BJ (cell line): ENCODE measurements at regions of chr10 and their contacts with region 1.

Region 1: DNA sequence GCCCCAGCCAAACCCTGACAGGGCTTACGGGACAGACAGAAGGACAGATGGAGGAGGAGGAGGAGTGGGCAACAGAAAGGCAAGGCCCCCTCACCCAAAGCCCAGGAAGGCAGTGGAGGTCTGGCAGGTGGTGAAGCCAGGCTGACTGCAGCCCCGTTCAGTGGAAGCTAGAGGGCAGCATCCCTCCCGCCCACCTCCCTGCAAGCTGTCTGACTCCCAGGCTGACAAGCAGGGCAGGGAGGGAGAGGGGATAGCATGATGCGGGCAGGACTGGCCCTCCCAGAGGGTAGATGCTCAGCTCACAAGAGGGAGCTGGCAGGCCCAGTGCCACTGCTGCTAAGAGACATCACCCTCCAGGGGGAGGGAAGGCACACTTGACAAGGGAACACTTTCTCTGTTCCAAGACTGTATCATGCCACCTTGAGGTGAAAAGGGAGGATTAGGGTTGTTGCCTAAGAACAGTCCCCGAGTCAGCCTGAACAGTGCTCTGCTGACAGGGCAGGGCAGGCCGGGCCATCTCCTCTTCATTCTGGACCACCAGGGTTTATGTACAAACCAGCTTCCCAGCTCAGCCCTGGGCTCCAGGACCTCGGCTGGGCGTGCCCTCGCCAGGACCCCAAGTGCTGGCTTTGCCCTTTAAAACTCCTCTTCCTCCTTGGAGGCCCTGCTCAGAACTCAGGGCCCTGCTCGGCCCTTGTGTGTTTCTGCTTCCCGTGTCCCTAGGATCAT is 61.8 kb downstream of the RASGEF1A start:
- DNase-seq: no peak
- H3K4me3 ChIP-seq: no peak overlapping the region
- H3K27me3 ChIP-seq: peaks cover 2% of the 10 kb centered on the region
- CTCF ChIP-seq: peak; percentile 83

Region 2: GRCh38 chr10:43170491-43170890 is 34.6 kb before region 1 on chr10:
- CTCF ChIA-PET with region 1: interaction called, 10 read pairs
- POLR2A ChIA-PET with region 1: no interaction called
- DNase-seq: no peak
- H3K4me3 ChIP-seq: no peak overlapping the region
- H3K27me3 ChIP-seq: no peaks in the 10 kb centered on the region
- CTCF ChIP-seq: 0 out of 2 replicates have a peak, but pooled peaks have one; percentile 7

Region 3: DNA sequence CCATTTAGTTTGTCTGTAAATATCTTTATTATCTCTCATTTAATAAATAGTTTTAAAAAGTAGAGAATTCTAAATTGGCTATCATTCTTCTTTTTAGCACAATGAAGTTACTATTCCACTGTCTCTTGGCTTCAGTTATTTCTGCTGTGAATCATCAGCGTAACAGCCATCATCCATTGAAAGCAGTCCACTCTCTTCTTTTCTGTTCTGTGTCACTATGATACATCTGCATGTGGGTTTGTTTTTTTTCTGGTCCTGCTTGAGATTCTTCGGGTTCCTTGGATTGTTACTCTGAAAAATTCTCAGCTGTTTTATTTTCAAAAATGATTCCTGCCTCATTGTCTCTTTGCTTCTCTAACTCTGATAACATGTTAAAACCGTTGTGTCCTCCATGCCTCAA is 14.3 kb before region 1 on chr10:
- CTCF ChIA-PET with region 1: interaction called, 42 read pairs
- POLR2A ChIA-PET with region 1: no interaction called
- DNase-seq: no peak
- H3K4me3 ChIP-seq: no peak overlapping the region
- H3K27me3 ChIP-seq: no peaks in the 10 kb centered on the region
- CTCF ChIP-seq: no peak

Region 4: GRCh38 chr10:43221419-43222209 is 16.5 kb after region 1 on chr10:
- CTCF ChIA-PET with region 1: interaction called, 87 read pairs
- POLR2A ChIA-PET with region 1: no interaction called
- DNase-seq: no peak
- H3K4me3 ChIP-seq: no peak overlapping the region
- H3K27me3 ChIP-seq: peaks cover 9% of the 10 kb centered on the region
- CTCF ChIP-seq: peak; percentile 25